H1 (cell line): ENCODE measurements at regions of chr10 and their contacts with region 1.

Region 1: DNA sequence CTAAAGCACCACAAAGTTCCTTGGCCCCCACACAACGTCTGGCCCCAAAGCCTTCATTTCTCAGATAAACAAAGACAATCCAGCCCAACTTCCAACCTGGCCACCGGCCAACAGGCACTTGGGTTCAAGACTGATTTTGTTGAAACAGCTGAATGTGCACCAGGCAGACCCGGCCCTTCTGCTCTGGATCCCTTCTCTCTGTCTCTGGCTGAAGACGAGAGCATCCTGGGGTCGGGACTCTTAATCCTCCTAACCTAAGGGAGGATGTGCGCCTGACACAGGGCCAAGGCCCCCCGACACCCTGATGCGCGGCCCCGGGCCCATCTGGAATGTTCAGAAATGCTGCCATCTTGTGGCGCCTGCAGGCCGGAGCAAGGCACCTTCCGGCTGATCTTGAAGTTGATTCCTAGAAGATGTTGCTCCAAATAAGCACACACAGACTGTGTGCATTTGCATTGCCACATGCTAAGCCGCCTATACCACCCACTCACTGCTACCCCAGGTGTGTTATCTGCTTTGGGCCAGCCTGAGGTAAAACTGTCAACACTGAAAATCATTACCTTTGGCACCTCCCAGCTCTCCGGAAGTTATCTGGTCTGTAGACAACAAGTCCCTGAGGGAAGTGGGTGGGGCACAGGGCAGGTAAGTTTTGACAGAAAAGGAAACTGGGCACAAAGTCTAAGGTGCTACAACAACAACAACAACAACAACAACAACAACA is 98.4 kb upstream of the HABP2 start:
- DNase-seq: peak; percentile 33 to 88
- H3K4me3 ChIP-seq: no peak overlapping the region
- H3K27ac ChIP-seq: no peak overlapping the region
- H3K4me1 ChIP-seq: 0 out of 7 replicates have a peak, but pooled peaks cover 0 to 3% (median 0%) of the 10 kb centered on the region in 4 experiments
- H3K27me3 ChIP-seq: no peaks in the 10 kb centered on the region
- CTCF ChIP-seq: peak; percentile 77 to 89 (median 81)
- EP300 ChIP-seq: no peak
- POLR2A ChIP-seq: no peak
- RAD21 ChIP-seq: peak; percentile 88 to 89

Region 2: DNA sequence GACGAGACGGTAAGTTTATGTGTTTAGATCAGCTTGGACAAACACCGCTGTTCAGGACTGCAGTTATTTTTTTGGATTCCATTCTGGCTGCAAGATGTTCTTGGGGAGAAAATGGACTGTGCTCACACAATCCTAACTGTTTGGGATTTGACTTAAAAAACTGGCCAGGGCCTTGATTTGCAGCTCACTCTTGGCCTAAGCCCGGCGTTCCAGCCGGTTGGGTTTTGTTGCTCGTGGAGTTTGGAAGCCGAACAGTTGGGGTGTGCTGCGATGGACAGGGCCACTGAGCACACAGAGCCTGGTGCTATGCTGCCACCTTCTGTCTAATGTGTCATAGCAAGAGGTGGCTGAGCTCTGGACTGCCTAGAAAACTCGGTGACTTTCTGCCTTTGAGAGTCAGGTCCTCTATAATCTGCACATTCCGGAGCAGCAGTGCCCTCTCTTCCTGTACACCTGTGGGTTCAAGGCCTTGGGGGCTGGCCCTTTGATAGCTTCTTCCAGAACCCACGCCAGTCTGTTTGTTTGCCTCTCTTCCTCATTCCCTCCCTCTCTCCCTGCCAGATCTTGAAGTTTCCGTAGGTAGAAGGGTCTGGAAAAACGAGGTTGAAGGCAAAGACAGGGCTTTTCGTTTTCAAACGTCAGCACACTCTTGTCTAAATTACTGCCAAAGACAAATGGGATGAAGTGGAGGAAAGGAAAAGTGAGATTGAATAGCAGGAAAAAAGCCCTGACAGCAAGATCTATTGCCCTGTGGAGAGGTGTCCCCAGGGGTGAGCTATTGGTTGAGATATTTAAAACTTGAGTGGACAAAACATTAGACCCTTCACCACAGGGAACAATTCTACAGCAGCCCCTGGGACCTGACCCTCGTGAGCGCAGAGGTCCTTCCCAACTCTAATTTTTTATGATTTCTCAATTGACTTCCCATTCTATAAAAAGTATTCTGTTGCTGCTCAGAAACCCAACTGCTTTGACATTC is 69.2 kb before region 1 on chr10:
- CTCF ChIA-PET with region 1: interaction called, 16 read pairs
- POLR2A ChIA-PET with region 1: no interaction called
- DNase-seq: peak; percentile 65 to 71
- H3K4me3 ChIP-seq: no peak overlapping the region
- H3K27ac ChIP-seq: no peak overlapping the region
- H3K4me1 ChIP-seq: no peaks in the 10 kb centered on the region
- H3K27me3 ChIP-seq: no peaks in the 10 kb centered on the region
- CTCF ChIP-seq: peak; percentile 80 to 93 (median 86)
- EP300 ChIP-seq: no peak
- POLR2A ChIP-seq: no peak
- RAD21 ChIP-seq: peak; percentile 98 to 99

Region 3: DNA sequence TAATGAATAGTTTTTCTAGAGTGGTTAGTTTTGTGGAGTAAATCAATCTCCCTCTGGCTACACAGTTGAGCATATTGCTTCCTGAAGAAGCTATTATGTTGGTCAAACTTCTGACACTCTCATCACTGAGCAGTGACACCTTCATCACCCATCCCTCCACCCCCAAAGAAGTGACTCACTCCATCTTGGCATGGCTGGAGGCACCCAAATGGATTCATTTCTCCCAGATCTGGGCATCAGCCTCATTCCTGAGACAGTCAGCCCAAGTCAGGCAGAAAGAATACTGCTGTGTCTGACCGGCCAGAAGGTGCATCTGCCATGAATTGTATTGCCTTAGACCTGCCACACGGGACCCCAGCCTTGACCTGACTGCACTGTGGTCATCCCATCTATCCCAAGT is 18.6 kb before region 1 on chr10:
- CTCF ChIA-PET with region 1: interaction called, 82 read pairs
- POLR2A ChIA-PET with region 1: interaction called, 3 read pairs
- DNase-seq: no peak
- H3K4me3 ChIP-seq: no peak overlapping the region
- H3K27ac ChIP-seq: no peak overlapping the region
- H3K4me1 ChIP-seq: no peaks in the 10 kb centered on the region; a peak in 1 of 7 replicates
- H3K27me3 ChIP-seq: no peaks in the 10 kb centered on the region
- CTCF ChIP-seq: no peak
- EP300 ChIP-seq: no peak
- POLR2A ChIP-seq: no peak
- RAD21 ChIP-seq: no peak

Region 4: GRCh38 chr10:113441220-113441619 is 13.3 kb before region 1 on chr10:
- CTCF ChIA-PET with region 1: interaction called, 82 read pairs
- POLR2A ChIA-PET with region 1: interaction called, 3 read pairs
- DNase-seq: no peak
- H3K4me3 ChIP-seq: no peak overlapping the region
- H3K27ac ChIP-seq: no peak overlapping the region
- H3K4me1 ChIP-seq: no peaks in the 10 kb centered on the region; a peak in 1 of 7 replicates
- H3K27me3 ChIP-seq: no peaks in the 10 kb centered on the region
- CTCF ChIP-seq: peak; percentile 26 to 49 (median 37); a peak in 3 of 4 replicates
- EP300 ChIP-seq: no peak
- POLR2A ChIP-seq: no peak
- RAD21 ChIP-seq: peak; percentile 44 to 56; a peak in 3 of 4 replicates

Region 5: GRCh38 chr10:113563306-113564088 is 109.0 kb after region 1 on chr10:
- CTCF ChIA-PET with region 1: interaction called, 13 read pairs
- POLR2A ChIA-PET with region 1: no interaction called
- DNase-seq: peak; percentile 47 to 91
- H3K4me3 ChIP-seq: no peak overlapping the region
- H3K27ac ChIP-seq: no peak overlapping the region
- H3K4me1 ChIP-seq: peaks cover 2 to 13% (median 9%) of the 10 kb centered on the region in 4 experiments; a peak in 6 of 7 replicates
- H3K27me3 ChIP-seq: peaks cover 44 to 53% (median 47%) of the 10 kb centered on the region in 4 experiments
- CTCF ChIP-seq: peak; percentile 95 to 97 (median 97)
- EP300 ChIP-seq: no peak
- POLR2A ChIP-seq: no peak
- RAD21 ChIP-seq: peak; percentile 97 to 98

Region 6: DNA sequence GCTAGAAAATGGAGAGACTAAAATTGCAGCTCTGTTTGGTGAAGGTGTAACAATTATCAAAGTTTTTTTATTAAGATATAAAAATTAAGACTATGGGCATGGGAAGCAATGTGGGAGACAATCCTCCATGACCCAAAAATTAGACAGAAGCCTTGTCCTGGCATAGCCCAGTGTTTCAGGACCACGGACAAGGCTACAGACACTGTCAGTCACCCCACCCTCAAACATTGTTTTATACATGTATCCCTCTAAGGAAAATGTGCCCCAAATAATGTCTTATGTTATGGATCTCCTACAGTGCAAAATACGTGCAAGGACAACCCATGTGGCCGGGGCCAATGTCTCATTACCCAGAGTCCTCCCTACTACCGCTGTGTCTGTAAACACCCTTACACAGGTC is 122.4 kb after region 1 on chr10:
- CTCF ChIA-PET with region 1: interaction called, 10 read pairs
- POLR2A ChIA-PET with region 1: no interaction called
- DNase-seq: peak in 1 of 2 experiments; percentile 53
- H3K4me3 ChIP-seq: no peak overlapping the region
- H3K27ac ChIP-seq: no peak overlapping the region
- H3K4me1 ChIP-seq: no peaks in the 10 kb centered on the region; a peak in 1 of 7 replicates
- H3K27me3 ChIP-seq: no peaks in the 10 kb centered on the region; a peak in 4 of 7 replicates
- CTCF ChIP-seq: no peak
- EP300 ChIP-seq: no peak
- POLR2A ChIP-seq: no peak
- RAD21 ChIP-seq: no peak